GM18951 (cell line): ENCODE measurements at regions of chr2 and their contacts with region 1.

Region 1: GRCh38 chr2:191148791-191149190 is 2.0 kb downstream of the STAT4 start:
- POLR2A ChIP-seq: no peak

Region 2: DNA sequence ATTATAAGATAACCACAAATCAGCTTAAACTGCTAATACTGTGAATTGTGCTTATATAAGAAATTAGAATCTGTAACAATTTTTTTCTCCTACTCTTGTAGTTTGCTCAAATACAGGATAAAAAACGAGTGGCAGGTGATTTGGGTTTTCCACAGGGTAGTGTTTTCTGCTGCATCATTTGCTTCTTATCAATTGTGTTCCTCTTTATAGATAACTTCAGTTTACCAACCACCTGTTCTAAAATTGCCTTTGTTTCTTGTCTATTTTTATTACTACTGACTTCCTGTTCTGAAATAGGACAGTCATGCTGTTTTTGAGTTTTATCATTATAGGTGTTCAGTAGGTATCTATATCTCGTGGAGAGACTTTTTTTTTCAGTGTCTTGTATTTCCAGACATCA is 683.7 kb before region 1 on chr2:
- in situ Hi-C with region 1: no loop called
- POLR2A ChIP-seq: no peak

Region 3: DNA sequence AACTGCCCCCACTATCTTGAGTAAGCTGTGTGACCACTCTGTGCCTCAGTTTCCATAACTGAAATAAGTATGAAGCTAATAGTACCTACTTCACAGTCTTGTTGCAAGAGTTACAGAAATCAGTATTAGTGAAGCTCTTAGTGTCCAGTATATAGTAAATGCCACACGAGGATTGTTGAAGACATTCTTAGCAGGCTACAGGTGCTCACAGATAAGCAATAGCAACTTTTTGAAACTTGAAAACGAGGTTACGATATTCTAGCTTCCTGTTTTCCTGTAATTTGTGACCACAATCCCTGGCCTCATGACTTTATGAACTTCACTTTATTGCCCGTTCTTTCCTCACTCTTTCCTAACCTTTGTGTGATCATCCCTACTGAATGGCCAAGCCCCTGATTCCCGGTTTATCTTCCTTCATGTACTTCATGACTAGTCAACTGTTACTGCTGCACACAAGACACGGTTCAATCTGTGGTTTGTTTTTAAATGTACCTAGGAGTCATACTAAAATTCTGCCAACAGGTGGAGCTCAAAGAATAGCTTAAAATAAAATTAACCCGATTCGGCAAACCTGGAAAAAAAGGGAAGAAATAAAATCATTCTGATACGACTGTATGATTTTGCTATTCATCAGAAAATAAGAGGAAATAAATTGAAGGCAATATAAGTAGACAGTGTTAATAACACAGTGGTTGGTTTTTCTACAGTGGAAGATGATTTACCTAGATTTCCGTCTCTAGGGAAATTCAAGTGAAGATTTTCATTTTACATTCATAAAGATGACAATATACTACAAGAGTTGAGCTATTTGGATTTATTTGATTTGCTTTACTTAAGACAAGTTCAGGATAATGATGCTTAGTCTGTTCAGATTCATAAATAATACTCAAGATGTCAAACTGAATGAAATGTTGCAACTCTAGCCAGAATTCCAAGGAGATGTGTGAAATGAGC is 96.7 kb before region 1 on chr2:
- in situ Hi-C with region 1: loop called (anchors 10 kb)
- POLR2A ChIP-seq: no peak

Region 4: GRCh38 chr2:191070276-191070675 is 78.5 kb before region 1 on chr2:
- in situ Hi-C with region 1: loop called (anchors 5 kb)
- POLR2A ChIP-seq: no peak